Activated T-helper 1 cell treated with anti-CD3 and anti-CD28 coated beads, Interleukin-12 subunit alpha, Interleukin-12 subunit beta, Interleukin-2, Interleukin-4 antibody, amounts not matched to agents 30 ng/mL and 10 ng/mL and 1 ng/mL, durations not matched to agents 14 hours and 24 hours and 36 hours (primary cell): ENCODE measurements at regions of chr11 and their contacts with region 1.

Region 1: GRCh38 chr11:62694455-62695167 is 5.3 kb upstream of the LRRN4CL start:
- DNase-seq: peak; percentile 61
- H3K4me3 Mint-ChIP-seq: no peak overlapping the region
- H3K27ac Mint-ChIP-seq: peak overlapping the region; percentile 71
- H3K4me1 Mint-ChIP-seq: peaks cover 8% of the 10 kb centered on the region
- H3K27me3 Mint-ChIP-seq: no peaks in the 10 kb centered on the region

Region 2: GRCh38 chr11:62394825-62395538 is 299.6 kb before region 1 on chr11:
- intact Hi-C with region 1: loop called (anchors 1 kb)
- DNase-seq: peak; percentile 48
- H3K4me3 Mint-ChIP-seq: no peak overlapping the region
- H3K27ac Mint-ChIP-seq: no peak overlapping the region
- H3K4me1 Mint-ChIP-seq: peaks cover 8% of the 10 kb centered on the region
- H3K27me3 Mint-ChIP-seq: peaks cover 2% of the 10 kb centered on the region

Region 3: GRCh38 chr11:62542750-62543567 is 151.7 kb before region 1 on chr11:
- intact Hi-C with region 1: no loop called
- DNase-seq: peak; percentile 69
- H3K4me3 Mint-ChIP-seq: peak overlapping the region; percentile 97
- H3K27ac Mint-ChIP-seq: peak overlapping the region; percentile 95
- H3K4me1 Mint-ChIP-seq: peaks cover 75% of the 10 kb centered on the region
- H3K27me3 Mint-ChIP-seq: peaks cover 3% of the 10 kb centered on the region

Region 4: DNA sequence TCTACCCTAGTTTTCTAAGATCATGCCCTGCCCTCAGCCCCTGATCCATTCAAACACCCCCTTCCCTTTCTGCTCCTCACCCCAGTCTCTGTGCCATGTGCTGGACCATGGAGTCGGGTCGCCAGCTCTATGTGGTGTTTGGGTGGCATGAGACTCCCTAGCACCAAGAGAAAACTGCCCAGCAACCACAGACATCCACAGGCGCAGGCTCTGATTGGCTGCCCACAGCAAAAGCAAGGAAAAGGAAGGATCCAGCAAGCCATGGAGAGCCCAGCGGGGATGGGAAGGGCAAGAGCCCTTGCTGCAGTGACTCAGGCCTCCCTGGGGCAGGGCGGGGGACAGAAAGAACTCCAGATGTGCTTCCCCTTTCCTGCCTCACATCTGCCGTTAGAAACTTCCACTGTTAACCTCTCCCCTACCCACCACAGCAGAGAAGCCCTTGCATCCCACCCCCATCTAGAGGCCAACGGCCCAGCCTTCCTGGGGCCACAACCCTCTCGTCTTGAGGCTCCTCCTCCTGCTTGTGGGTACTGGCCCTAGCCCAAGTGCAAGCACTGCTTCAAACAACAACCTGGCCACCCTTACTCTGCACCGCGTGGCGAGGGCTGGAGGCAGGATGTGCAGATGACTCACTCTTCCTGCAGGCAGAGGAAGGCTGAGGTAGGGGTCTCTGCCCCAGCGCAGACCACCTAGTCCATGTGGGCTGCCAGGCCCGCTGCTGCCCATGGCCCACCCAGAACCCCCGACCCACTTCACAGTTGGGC is 138.3 kb before region 1 on chr11:
- intact Hi-C with region 1: no loop called
- DNase-seq: peak; percentile 87
- H3K4me3 Mint-ChIP-seq: peak overlapping the region; percentile 73
- H3K27ac Mint-ChIP-seq: peak overlapping the region; percentile 99
- H3K4me1 Mint-ChIP-seq: peaks cover 93% of the 10 kb centered on the region
- H3K27me3 Mint-ChIP-seq: no peaks in the 10 kb centered on the region

Region 5: GRCh38 chr11:62678770-62679696 is 15.6 kb before region 1 on chr11 and contains the start of gene UBXN1:
- intact Hi-C with region 1: loop called (anchors 1 kb)
- DNase-seq: peak; percentile 79
- H3K4me3 Mint-ChIP-seq: peak within 1 kb of the TSS; percentile 80
- H3K27ac Mint-ChIP-seq: peak within 1 kb of the TSS; percentile 82
- H3K4me1 Mint-ChIP-seq: peaks cover 36% of the 10 kb centered on the region
- H3K27me3 Mint-ChIP-seq: no peaks in the 10 kb centered on the region
- total RNA-seq, gene UBXN1: 125 and 128 TPM in 2 replicates

Region 6: GRCh38 chr11:62771144-62772021 is 76.8 kb after region 1 on chr11 and contains the start of gene TAF6L:
- intact Hi-C with region 1: no loop called
- DNase-seq: peak; percentile 91
- H3K4me3 Mint-ChIP-seq: peak within 1 kb of the TSS; percentile 89
- H3K27ac Mint-ChIP-seq: peak within 1 kb of the TSS; percentile 91
- H3K4me1 Mint-ChIP-seq: peaks cover 30% of the 10 kb centered on the region
- H3K27me3 Mint-ChIP-seq: no peaks in the 10 kb centered on the region
- total RNA-seq, gene TAF6L: 19.4 and 20.7 TPM in 2 replicates